ENCODE measurements at regions of chr9 and their contacts with region 1.

Region 1: GRCh38 chr9:12391839-12392509 is 301.2 kb upstream of the TYRP1 start:
- DNase-seq: no peak
- ATAC-seq: no peak
- H3K4me3 Mint-ChIP-seq: no peak overlapping the region
- H3K27ac Mint-ChIP-seq: no peak overlapping the region
- H3K4me1 Mint-ChIP-seq: no peaks in the 10 kb centered on the region
- H3K27me3 Mint-ChIP-seq: no peaks in the 10 kb centered on the region

Region 2: GRCh38 chr9:10744669-10745068 is 1647.3 kb before region 1 on chr9:
- CTCF ChIA-PET with region 1: no interaction called
- POLR2A ChIA-PET with region 1: no interaction called
- intact Hi-C with region 1: no loop called
- DNase-seq: no peak
- ATAC-seq: no peak
- H3K4me3 Mint-ChIP-seq: no peak overlapping the region
- H3K27ac Mint-ChIP-seq: no peak overlapping the region
- H3K4me1 Mint-ChIP-seq: no peaks in the 10 kb centered on the region
- H3K27me3 Mint-ChIP-seq: no peaks in the 10 kb centered on the region

Region 3: DNA sequence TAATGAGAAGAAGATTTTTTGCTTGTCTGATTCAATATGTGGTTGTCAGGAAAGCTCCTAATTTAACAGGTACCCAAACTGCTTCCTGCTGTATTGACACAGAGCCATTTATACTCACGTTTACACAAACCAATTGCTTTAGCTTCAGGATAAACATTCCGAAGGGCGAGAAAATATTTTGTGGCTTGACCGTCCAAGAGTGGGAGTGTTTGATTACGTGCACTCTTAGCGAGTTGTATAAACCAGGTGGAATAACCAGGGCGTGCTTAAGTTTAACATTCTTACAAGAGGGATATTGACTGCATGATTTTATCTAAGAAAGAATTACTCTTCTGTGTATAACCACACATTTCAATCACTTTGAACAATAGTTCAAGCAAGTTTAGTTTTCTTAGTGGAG is 22.5 kb after region 1 on chr9:
- CTCF ChIA-PET with region 1: no interaction called
- POLR2A ChIA-PET with region 1: no interaction called
- intact Hi-C with region 1: no loop called
- DNase-seq: no peak
- ATAC-seq: no peak
- H3K4me3 Mint-ChIP-seq: no peak overlapping the region
- H3K27ac Mint-ChIP-seq: no peak overlapping the region
- H3K4me1 Mint-ChIP-seq: no peaks in the 10 kb centered on the region
- H3K27me3 Mint-ChIP-seq: no peaks in the 10 kb centered on the region

Region 4: GRCh38 chr9:12441506-12441905 is 49.5 kb after region 1 on chr9:
- CTCF ChIA-PET with region 1: no interaction called
- POLR2A ChIA-PET with region 1: no interaction called
- intact Hi-C with region 1: loop called in 1 of 2 experiments (anchors 10 kb)
- DNase-seq: no peak
- ATAC-seq: no peak
- H3K4me3 Mint-ChIP-seq: no peak overlapping the region
- H3K27ac Mint-ChIP-seq: no peak overlapping the region
- H3K4me1 Mint-ChIP-seq: no peaks in the 10 kb centered on the region
- H3K27me3 Mint-ChIP-seq: no peaks in the 10 kb centered on the region